ENCODE measurements at regions of chr12 and their contacts with region 1.

Region 1: GRCh38 chr12:88970742-88971141 is 381.6 kb downstream of the DUSP6 start:
- DNase-seq: no peak
- ATAC-seq: peak in 5 of 8 donors; percentile 25 to 76 (median 52)
- H3K4me3 ChIP-seq: no peak overlapping the region
- H3K27ac ChIP-seq: peak overlapping the region in 7 of 10 donors; percentile 24 to 66 (median 39)
- H3K4me1 ChIP-seq: peaks cover 0 to 19% (median 2%) of the 10 kb centered on the region in 9 donors
- H3K27me3 ChIP-seq: no peaks in the 10 kb centered on the region
- CTCF ChIP-seq: no peak

Region 2: GRCh38 chr12:88854260-88854659 is 116.5 kb before region 1 on chr12:
- intact Hi-C with region 1: no loop called
- DNase-seq: no peak
- ATAC-seq: no peak
- H3K4me3 ChIP-seq: no peak overlapping the region
- H3K27ac ChIP-seq: no peak overlapping the region
- H3K4me1 ChIP-seq: no peaks in the 10 kb centered on the region
- H3K27me3 ChIP-seq: no peaks in the 10 kb centered on the region
- CTCF ChIP-seq: no peak

Region 3: DNA sequence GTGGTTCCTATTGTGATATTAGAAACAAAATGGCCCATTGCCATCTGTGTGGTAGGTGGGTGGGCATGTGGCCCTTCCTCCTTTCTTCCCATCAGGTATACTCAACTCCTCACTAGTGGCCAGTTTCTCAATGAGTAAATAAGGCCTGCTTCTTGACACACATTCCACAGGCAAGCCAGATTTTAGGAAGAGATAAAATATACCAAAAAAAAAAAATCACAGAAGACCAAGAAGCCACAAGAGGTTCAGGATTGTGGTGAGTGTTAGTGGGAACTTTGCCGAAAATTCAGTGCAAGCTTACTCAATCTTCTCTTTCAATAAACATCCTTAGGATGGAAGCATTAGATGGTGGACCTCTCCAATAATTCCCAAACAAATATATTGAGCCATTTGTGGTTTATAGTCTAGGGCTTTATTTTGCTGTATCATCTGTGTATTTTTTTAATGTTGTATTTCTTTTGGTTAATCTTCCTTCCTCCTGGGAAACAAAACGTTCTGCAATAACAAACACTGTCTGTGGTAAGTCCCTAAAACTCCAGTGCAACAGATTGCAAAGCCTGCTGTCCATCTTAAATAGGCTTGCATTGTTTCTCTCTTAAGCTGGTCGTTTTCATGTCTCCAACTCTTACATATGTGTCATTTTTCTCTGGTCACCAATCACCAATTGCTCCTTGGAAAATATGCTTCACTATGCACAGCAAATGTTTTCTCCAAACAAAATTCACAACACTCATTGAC is 100.6 kb before region 1 on chr12:
- intact Hi-C with region 1: no loop called
- DNase-seq: no peak
- ATAC-seq: no peak
- H3K4me3 ChIP-seq: no peak overlapping the region
- H3K27ac ChIP-seq: peak overlapping the region in 2 of 10 donors; percentile 37
- H3K4me1 ChIP-seq: peaks cover 0 to 13% (median 0%) of the 10 kb centered on the region in 9 donors
- H3K27me3 ChIP-seq: no peaks in the 10 kb centered on the region
- CTCF ChIP-seq: no peak

Region 4: GRCh38 chr12:88897723-88898122 is 73.0 kb before region 1 on chr12:
- intact Hi-C with region 1: loop called in 1 of 10 experiments (anchors 5 kb)
- DNase-seq: peak in 1 of 2 donors; percentile 45
- ATAC-seq: peak; percentile 61 to 97 (median 94)
- H3K4me3 ChIP-seq: no peak overlapping the region
- H3K27ac ChIP-seq: peak overlapping the region in 8 of 10 donors; percentile 31 to 79 (median 70)
- H3K4me1 ChIP-seq: peaks cover 0 to 26% (median 3%) of the 10 kb centered on the region in 9 donors
- H3K27me3 ChIP-seq: no peaks in the 10 kb centered on the region
- CTCF ChIP-seq: no peak

Region 5: DNA sequence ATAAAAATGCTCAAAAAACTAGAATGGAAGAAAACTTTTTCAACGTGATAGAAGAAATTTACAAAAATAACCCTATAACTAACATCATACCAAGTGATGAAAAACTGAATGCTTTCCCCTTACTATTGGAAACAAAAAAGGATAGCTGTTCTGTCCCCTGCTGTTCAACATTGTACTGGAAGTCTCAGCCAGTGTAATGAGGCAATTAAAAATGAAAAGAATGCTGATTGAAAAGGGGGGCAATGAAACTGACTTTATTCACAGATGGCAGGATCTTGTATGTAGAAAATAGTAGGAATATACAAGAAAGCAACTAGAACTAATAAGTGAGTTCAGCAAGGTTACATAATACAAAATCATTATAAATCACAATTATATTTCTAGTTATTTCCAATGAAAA is 52.6 kb before region 1 on chr12:
- intact Hi-C with region 1: no loop called
- DNase-seq: no peak
- ATAC-seq: no peak
- H3K4me3 ChIP-seq: no peak overlapping the region
- H3K27ac ChIP-seq: no peak overlapping the region
- H3K4me1 ChIP-seq: peaks cover 0 to 11% (median 0%) of the 10 kb centered on the region in 9 donors
- H3K27me3 ChIP-seq: no peaks in the 10 kb centered on the region
- CTCF ChIP-seq: no peak

Region 6: GRCh38 chr12:89117448-89118034 is 146.8 kb after region 1 on chr12:
- intact Hi-C with region 1: no loop called
- DNase-seq: no peak
- ATAC-seq: peak in 6 of 8 donors; percentile 31 to 60 (median 48)
- H3K4me3 ChIP-seq: no peak overlapping the region
- H3K27ac ChIP-seq: peak overlapping the region in 1 of 10 donors; percentile 18
- H3K4me1 ChIP-seq: peaks cover 0 to 11% (median 8%) of the 10 kb centered on the region in 9 donors
- H3K27me3 ChIP-seq: no peaks in the 10 kb centered on the region
- CTCF ChIP-seq: no peak

Measured in heart right ventricle (tissue), 16 donors.